ENCODE measurements at regions of chr4 and their contacts with region 1.

Region 1: GRCh38 chr4:10106421-10107039 is 10.1 kb downstream of the WDR1 start:
- DNase-seq: peak; percentile 97
- H3K4me3 Mint-ChIP-seq: peak overlapping the region; percentile 44
- H3K27ac Mint-ChIP-seq: peak overlapping the region; percentile 90
- H3K4me1 Mint-ChIP-seq: peaks cover 44% of the 10 kb centered on the region
- H3K27me3 Mint-ChIP-seq: no peaks in the 10 kb centered on the region
- CTCF ChIP-seq: no peak

Region 2: GRCh38 chr4:10089346-10089745 is 17.2 kb before region 1 on chr4:
- CTCF ChIA-PET with region 1: no interaction called
- POLR2A ChIA-PET with region 1: interaction called, 12 read pairs
- intact Hi-C with region 1: no loop called
- DNase-seq: peak; percentile 38
- H3K4me3 Mint-ChIP-seq: no peak overlapping the region
- H3K27ac Mint-ChIP-seq: no peak overlapping the region
- H3K4me1 Mint-ChIP-seq: no peaks in the 10 kb centered on the region
- H3K27me3 Mint-ChIP-seq: no peaks in the 10 kb centered on the region
- CTCF ChIP-seq: no peak

Region 3: DNA sequence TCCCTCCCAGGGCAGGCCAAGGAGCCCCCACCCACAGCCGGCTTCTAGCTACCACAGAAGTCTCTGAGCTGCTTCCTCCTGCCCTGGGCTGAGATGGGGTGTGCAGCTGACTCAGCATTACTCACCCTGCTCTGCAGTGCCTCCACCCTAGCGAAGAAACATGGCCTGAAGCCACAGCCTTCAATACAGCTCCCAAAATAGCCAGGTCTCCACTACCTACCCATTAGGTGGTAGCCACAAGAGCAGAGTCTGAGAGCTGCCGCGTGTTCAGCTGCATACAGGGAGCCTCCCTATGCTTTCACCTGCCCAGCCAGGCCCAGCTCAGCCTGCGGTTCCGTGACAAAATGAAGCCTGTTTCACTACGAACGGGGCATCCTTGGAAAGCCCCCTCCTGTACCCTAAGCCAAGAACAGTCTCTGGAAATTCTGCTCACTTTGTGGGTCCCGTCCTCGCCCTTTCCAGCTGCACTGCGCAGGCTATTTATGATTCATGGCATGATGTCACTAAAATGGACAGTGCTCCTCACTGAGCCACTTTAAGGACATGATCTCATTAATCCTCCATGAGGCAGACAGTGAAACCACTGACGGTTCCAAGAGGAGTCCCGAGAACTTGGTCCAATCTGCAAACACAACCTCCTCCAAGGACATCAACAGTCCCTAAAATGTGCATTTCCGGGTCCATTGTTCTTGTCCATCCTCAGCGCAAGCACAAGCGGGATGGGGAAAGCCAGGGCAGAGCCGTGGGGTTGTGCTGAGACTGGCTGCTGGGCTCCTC is 10.1 kb before region 1 on chr4:
- CTCF ChIA-PET with region 1: interaction called, 3 read pairs
- POLR2A ChIA-PET with region 1: interaction called, 52 read pairs
- intact Hi-C with region 1: loop called (anchors 1 kb)
- DNase-seq: peak; percentile 94
- H3K4me3 Mint-ChIP-seq: peak overlapping the region; percentile 33
- H3K27ac Mint-ChIP-seq: peak overlapping the region; percentile 41
- H3K4me1 Mint-ChIP-seq: peaks cover 33% of the 10 kb centered on the region
- H3K27me3 Mint-ChIP-seq: no peaks in the 10 kb centered on the region
- CTCF ChIP-seq: no peak

Region 4: DNA sequence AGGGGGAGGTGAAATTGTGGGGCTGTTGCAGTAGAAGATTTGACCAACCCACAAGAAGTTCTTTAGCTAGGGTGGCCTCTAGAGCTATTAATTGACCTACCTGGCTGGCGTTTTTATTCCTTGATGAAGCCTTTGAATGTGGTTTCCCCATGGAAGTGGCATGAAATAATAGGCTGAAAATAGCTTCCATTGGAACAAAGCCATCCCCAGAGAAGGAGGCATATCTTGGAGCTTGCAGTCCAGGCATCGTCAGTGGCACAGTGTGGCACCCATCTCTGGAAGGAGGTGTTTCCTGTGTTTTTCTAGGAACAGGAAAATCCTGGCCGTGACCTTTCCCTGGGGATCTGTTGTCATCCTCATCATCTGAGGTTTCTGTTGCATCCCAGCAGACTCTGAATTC is 106.4 kb after region 1 on chr4:
- CTCF ChIA-PET with region 1: no interaction called
- POLR2A ChIA-PET with region 1: no interaction called
- intact Hi-C with region 1: no loop called
- DNase-seq: no peak
- H3K4me3 Mint-ChIP-seq: no peak overlapping the region
- H3K27ac Mint-ChIP-seq: no peak overlapping the region
- H3K4me1 Mint-ChIP-seq: no peaks in the 10 kb centered on the region
- H3K27me3 Mint-ChIP-seq: no peaks in the 10 kb centered on the region
- CTCF ChIP-seq: no peak

Region 5: GRCh38 chr4:10577018-10577417 is 470.5 kb after region 1 on chr4:
- CTCF ChIA-PET with region 1: no interaction called
- POLR2A ChIA-PET with region 1: no interaction called
- intact Hi-C with region 1: no loop called
- DNase-seq: no peak
- H3K4me3 Mint-ChIP-seq: no peak overlapping the region
- H3K27ac Mint-ChIP-seq: no peak overlapping the region
- H3K4me1 Mint-ChIP-seq: no peaks in the 10 kb centered on the region
- H3K27me3 Mint-ChIP-seq: peaks cover 12% of the 10 kb centered on the region
- CTCF ChIP-seq: no peak